PC-3 (cell line): ENCODE measurements at regions of chr14 and their contacts with region 1.

Region 1: GRCh38 chr14:36747411-36748184 is 85.9 kb downstream of the PAX9 start:
- DNase-seq: peak; percentile 66
- ATAC-seq: peak; percentile 60
- H3K4me3 ChIP-seq: no peak overlapping the region
- H3K27ac ChIP-seq: no peak overlapping the region
- H3K4me1 ChIP-seq: peaks cover 18% of the 10 kb centered on the region
- H3K27me3 ChIP-seq: no peaks in the 10 kb centered on the region
- CTCF ChIP-seq: peak; percentile 92

Region 2: GRCh38 chr14:36683083-36683740 is 64.4 kb before region 1 on chr14:
- CTCF ChIA-PET with region 1: no interaction called
- POLR2A ChIA-PET with region 1: no interaction called
- intact Hi-C with region 1: loop called (anchors 5 kb)
- DNase-seq: peak; percentile 82
- ATAC-seq: peak; percentile 81
- H3K4me3 ChIP-seq: no peak overlapping the region; the same call in 1 of the 2 replicates
- H3K27ac ChIP-seq: peak overlapping the region; percentile 43
- H3K4me1 ChIP-seq: peaks cover 35% of the 10 kb centered on the region
- H3K27me3 ChIP-seq: no peaks in the 10 kb centered on the region
- CTCF ChIP-seq: no peak

Region 3: GRCh38 chr14:36700656-36701055 is 46.9 kb before region 1 on chr14:
- CTCF ChIA-PET with region 1: interaction called, 5 read pairs
- POLR2A ChIA-PET with region 1: no interaction called
- intact Hi-C with region 1: loop called (anchors 5 kb)
- DNase-seq: peak; percentile 73
- ATAC-seq: peak; percentile 95
- H3K4me3 ChIP-seq: no peak overlapping the region
- H3K27ac ChIP-seq: peak overlapping the region; percentile 49
- H3K4me1 ChIP-seq: peaks cover 16% of the 10 kb centered on the region
- H3K27me3 ChIP-seq: no peaks in the 10 kb centered on the region
- CTCF ChIP-seq: no peak